A549 (cell line): ENCODE measurements at regions of chr7 and their contacts with region 1.

Region 1: GRCh38 chr7:29609162-29610037 is 45.8 kb downstream of the PRR15 start:
- DNase-seq: peak; percentile 62 to 77
- ATAC-seq: peak; percentile 74 to 79
- H3K4me3 ChIP-seq: peak overlapping the region; percentile 4; the same call in 1 of the 3 replicates
- H3K27ac ChIP-seq: peak overlapping the region; percentile 49 to 71; a peak in 5 of 6 replicates
- H3K4me1 ChIP-seq: peaks cover 48% of the 10 kb centered on the region
- CTCF ChIP-seq: peak; percentile 77
- EP300 ChIP-seq: no peak
- POLR2A ChIP-seq: no peak
- RAD21 ChIP-seq: peak; percentile 50 to 53

Region 2: GRCh38 chr7:29548823-29549222 is 60.6 kb before region 1 on chr7:
- CTCF ChIA-PET with region 1: no interaction called
- POLR2A ChIA-PET with region 1: no interaction called
- DNase-seq: no peak
- ATAC-seq: no peak
- H3K4me3 ChIP-seq: no peak overlapping the region
- H3K27ac ChIP-seq: no peak overlapping the region
- H3K4me1 ChIP-seq: no peaks in the 10 kb centered on the region
- CTCF ChIP-seq: no peak
- EP300 ChIP-seq: no peak
- POLR2A ChIP-seq: no peak
- RAD21 ChIP-seq: no peak

Region 3: DNA sequence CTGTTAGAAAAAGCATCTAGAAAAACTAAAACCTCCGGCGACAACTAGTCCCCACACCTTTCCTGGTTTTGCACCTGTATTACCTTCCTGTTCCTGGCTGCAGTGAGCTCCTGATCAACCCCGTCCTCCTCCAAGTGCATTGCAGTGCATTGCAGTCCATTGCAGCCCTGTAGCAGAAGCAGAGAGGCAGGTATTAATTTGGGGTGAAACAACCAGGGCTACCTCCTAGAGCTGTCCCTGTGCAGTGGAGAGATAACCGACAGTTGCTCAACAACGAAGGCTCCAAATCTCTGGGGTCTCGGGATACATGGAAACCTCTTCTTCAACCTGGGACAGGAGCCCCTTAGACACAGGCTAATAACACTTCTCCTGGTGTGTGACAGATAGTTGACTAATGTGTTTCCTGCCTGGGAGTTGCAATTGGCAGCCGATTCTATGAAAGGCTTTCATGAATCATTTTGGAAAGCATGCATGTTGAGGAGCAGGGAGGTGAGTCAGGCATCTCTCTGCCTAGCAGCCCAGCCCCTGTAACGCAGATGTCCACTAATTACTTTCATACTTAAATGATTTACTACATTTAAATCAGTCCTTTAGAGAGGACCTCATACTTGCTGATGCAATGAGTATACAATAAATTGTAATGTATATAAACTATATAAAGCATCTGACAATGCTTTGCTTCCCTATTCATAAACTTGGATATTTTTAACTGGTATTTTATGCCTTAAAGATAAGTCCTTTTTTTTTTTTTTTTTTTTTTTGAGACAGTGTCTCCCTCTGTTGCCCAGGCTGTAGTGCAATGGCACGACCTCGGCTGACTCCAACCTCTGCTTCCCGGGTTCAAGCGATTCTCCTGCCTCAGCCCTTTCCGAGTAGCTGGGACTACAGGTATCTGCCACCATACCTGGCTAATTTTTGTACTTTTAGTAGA is 13.2 kb after region 1 on chr7:
- CTCF ChIA-PET with region 1: interaction called, 27 read pairs
- POLR2A ChIA-PET with region 1: no interaction called
- DNase-seq: peak; percentile 61 to 80
- ATAC-seq: peak; percentile 97 to 99
- H3K4me3 ChIP-seq: no peak overlapping the region
- H3K27ac ChIP-seq: peak overlapping the region; percentile 46 to 81; a peak in 5 of 6 replicates
- H3K4me1 ChIP-seq: peaks cover 18% of the 10 kb centered on the region
- CTCF ChIP-seq: no peak
- EP300 ChIP-seq: no peak
- POLR2A ChIP-seq: no peak
- RAD21 ChIP-seq: no peak